Breast epithelium (tissue), 4 donors: ENCODE measurements at regions of chr12 and their contacts with region 1.

Region 1: GRCh38 chr12:49888461-49889151 is 15.1 kb downstream of the FAIM2 start:
- DNase-seq: peak in 1 of 2 donors; percentile 42
- H3K4me3 ChIP-seq: no peak overlapping the region
- H3K27ac ChIP-seq: peak overlapping the region; percentile 79
- H3K4me1 ChIP-seq: peaks cover 0 to 16% of the 10 kb centered on the region in 2 donors
- H3K27me3 ChIP-seq: no peaks in the 10 kb centered on the region
- CTCF ChIP-seq: peak in 2 of 3 donors; percentile 14 to 37
- POLR2A ChIP-seq: no peak

Region 2: GRCh38 chr12:49825360-49825754 is 63.2 kb before region 1 on chr12:
- intact Hi-C with region 1: loop called (anchors 1 kb)
- DNase-seq: no peak
- H3K4me3 ChIP-seq: peak overlapping the region in 2 of 3 donors; percentile 87 to 89
- H3K27ac ChIP-seq: peak overlapping the region; percentile 87 to 89
- H3K4me1 ChIP-seq: peaks cover 4 to 19% of the 10 kb centered on the region in 2 donors
- H3K27me3 ChIP-seq: no peaks in the 10 kb centered on the region
- CTCF ChIP-seq: no peak
- POLR2A ChIP-seq: no peak

Region 3: GRCh38 chr12:49855005-49855404 is 33.6 kb before region 1 on chr12:
- intact Hi-C with region 1: no loop called
- DNase-seq: no peak
- H3K4me3 ChIP-seq: no peak overlapping the region
- H3K27ac ChIP-seq: no peak overlapping the region
- H3K4me1 ChIP-seq: no peaks in the 10 kb centered on the region
- H3K27me3 ChIP-seq: no peaks in the 10 kb centered on the region
- CTCF ChIP-seq: no peak
- POLR2A ChIP-seq: no peak

Region 4: GRCh38 chr12:49868952-49869815 is 19.4 kb before region 1 on chr12:
- intact Hi-C with region 1: loop called (anchors 1 kb)
- DNase-seq: peak; percentile 57 to 84
- H3K4me3 ChIP-seq: no peak overlapping the region
- H3K27ac ChIP-seq: peak overlapping the region; percentile 67 to 88
- H3K4me1 ChIP-seq: peaks cover 6 to 26% of the 10 kb centered on the region in 2 donors
- H3K27me3 ChIP-seq: no peaks in the 10 kb centered on the region
- CTCF ChIP-seq: no peak
- POLR2A ChIP-seq: no peak